ENCODE measurements at regions of chr10 and their contacts with region 1.

Region 1: GRCh38 chr10:5442065-5442989 is 30.0 kb downstream of the NET1 start:
- DNase-seq: peak in 1 of 2 donors; percentile 82
- H3K4me3 ChIP-seq: no peak overlapping the region
- H3K27ac ChIP-seq: no peak overlapping the region
- H3K4me1 ChIP-seq: peaks cover 4 to 61% (median 35%) of the 10 kb centered on the region in 4 donors
- H3K27me3 ChIP-seq: no peaks in the 10 kb centered on the region
- CTCF ChIP-seq: peak in 5 of 7 experiments; percentile 54 to 78 (median 60)
- EP300 ChIP-seq: no peak
- POLR2A ChIP-seq: no peak

Region 2: DNA sequence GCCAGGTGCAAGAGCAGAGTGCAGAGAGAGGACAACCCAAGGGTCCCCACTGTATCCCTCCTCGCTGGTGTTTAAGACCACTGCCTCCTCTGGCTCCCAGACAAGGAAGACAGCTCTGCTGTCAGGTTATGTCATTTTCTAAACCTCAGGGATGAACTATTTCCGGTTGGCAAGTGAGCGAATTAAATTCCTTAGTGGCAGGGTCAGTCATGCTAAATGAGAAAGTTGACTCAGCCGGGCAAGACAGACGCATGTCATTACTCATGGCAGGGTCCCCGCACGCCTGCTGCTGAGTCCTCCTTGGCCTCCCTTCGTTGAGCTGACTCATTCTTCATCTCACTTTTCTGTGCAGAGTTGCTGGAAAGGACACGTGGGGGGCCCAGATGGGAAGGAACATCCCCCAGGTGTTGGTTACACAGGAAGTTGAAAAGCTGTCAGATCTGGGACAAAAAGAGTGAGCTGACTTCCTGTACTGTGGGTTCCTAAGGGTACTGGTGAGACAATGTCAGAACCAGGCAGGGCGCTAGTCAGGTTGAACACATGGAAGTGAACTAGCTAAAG is 124.7 kb before region 1 on chr10:
- intact Hi-C with region 1: no loop called
- DNase-seq: peak in 1 of 2 donors; percentile 32
- H3K4me3 ChIP-seq: no peak overlapping the region
- H3K27ac ChIP-seq: no peak overlapping the region
- H3K4me1 ChIP-seq: no peaks in the 10 kb centered on the region
- H3K27me3 ChIP-seq: no peaks in the 10 kb centered on the region
- CTCF ChIP-seq: no peak
- EP300 ChIP-seq: no peak
- POLR2A ChIP-seq: no peak

Region 3: DNA sequence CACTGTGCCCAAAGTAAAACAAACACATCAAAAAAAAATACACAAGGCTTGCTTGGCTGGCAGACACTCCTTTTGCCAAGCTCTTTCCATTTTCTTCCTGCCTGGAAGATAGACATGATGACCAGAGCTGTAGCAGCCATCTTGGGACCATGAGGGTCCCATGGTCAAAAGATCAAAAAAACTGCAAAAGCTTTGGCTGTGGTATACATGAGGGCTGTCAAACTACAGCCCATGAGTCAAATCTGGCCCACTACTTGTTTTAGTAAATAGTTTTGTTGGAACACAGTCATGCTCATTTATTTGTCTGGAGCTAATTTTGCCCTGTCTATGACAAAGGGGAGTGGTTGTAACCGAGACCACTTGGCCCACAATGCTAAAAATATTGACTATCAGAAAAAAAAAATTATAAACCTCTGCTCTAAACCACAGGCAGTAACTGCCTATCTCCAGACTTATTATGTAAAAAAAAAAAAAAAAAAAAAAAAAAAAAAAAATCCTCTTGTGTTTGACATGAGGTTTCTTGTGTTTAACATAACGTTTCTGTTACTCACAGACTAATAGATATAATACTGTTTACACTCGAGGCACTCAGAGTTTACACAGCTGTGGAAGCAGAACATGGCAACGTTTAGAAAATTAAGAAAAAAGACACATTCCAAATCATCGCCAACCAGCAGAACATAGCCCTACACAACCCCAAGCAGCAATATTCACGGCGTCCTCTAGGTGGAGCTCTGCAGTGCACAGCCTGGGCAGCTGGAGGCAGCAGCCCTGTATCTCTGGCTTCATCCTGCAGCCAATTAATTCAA is 187.2 kb after region 1 on chr10:
- intact Hi-C with region 1: loop called (anchors 5 kb)
- DNase-seq: peak; percentile 84 to 93
- H3K4me3 ChIP-seq: no peak overlapping the region
- H3K27ac ChIP-seq: peak overlapping the region in 4 of 5 donors; percentile 59 to 83 (median 68)
- H3K4me1 ChIP-seq: peaks cover 31 to 82% (median 48%) of the 10 kb centered on the region in 4 donors
- H3K27me3 ChIP-seq: no peaks in the 10 kb centered on the region
- CTCF ChIP-seq: peak in 5 of 7 experiments; percentile 62 to 89 (median 82)
- EP300 ChIP-seq: no peak
- POLR2A ChIP-seq: no peak